ENCODE measurements at regions of chr17 and their contacts with region 1.

Region 1: GRCh38 chr17:43367737-43368242 is 31.0 kb upstream of the ARL4D start:
- DNase-seq: no peak
- H3K4me3 ChIP-seq: peak overlapping the region; percentile 46
- CTCF ChIP-seq: no peak

Region 2: GRCh38 chr17:43316522-43317142 is 51.2 kb before region 1 on chr17:
- CTCF ChIA-PET with region 1: no interaction called
- POLR2A ChIA-PET with region 1: interaction called, 14 read pairs
- DNase-seq: no peak
- H3K4me3 ChIP-seq: no peak overlapping the region
- CTCF ChIP-seq: no peak

Region 3: GRCh38 chr17:43349142-43349541 is 18.6 kb before region 1 on chr17:
- CTCF ChIA-PET with region 1: no interaction called
- POLR2A ChIA-PET with region 1: no interaction called
- DNase-seq: no peak
- H3K4me3 ChIP-seq: no peak overlapping the region
- CTCF ChIP-seq: no peak

Region 4: DNA sequence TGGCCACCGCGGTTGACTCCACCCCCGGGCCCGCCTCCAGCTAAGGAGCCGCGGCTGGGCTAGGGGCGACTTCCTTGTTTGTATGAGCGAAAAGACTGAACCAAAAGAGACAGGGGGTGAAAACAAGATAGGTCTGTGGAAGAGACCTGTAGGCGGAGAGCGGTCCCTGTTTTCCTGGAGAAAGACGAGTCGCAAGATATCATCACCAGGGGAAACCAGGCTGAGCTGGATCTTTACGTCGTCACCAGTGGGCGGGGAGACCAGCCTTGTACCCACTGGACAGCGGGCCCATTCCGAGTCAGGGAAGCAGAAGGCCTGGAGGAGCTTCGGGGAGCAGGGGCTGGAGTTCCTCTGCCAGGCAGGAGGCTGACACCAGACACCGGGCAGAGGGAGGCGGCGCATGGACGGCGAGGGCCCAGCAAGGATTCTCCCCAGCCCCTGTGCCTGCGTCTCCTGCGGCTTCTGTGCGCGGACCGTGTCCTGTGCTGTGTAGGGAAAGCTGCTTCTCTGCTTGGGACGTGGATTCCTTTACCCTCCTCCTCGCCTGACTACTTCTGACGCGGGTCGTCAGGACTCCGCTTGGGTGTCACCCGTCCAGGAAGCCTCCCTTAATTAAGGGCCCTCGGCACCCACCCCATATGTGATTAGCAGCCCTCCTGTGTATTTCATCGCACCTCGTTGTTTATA is 20.7 kb after region 1 on chr17:
- CTCF ChIA-PET with region 1: interaction called, 22 read pairs
- POLR2A ChIA-PET with region 1: interaction called, 72 read pairs
- DNase-seq: no peak
- H3K4me3 ChIP-seq: peak overlapping the region; percentile 65
- CTCF ChIP-seq: no peak

Region 5: DNA sequence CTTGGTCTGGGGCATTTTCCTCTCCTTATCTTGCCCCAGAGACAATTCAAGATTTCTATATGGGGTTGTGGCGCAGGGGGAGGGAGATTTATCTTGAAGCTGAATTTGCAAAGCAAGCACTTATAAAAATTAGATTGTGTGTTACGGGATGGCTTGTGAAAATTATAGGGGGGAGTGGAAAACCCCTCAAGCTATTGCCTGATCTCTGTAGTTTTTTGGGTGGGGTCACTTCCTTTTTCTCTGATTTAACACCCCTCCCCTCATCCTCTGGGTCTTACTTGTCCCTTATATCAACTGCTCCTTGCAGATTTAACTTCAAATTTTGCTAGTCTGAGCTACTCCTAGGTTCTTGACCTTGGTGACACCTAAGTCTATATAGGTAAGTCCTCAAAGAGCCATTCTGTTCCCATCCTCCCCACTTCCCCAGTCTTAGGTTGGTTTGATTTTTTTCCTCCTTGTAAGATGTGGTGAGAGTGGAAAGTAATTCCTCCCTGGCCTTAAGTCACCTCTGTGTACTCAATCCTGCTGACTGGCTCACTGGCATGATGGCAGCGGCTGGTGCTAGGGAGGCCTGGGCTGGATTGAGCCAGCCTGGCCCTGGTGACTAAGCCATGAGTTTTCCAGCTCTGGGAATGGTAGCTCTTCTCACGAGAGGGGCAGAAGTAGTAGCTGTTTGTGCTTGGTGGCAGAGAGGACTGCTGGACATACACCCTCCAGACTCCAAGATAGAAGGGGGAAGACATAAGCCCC is 33.3 kb after region 1 on chr17:
- CTCF ChIA-PET with region 1: interaction called, 3 read pairs
- POLR2A ChIA-PET with region 1: interaction called, 17 read pairs
- DNase-seq: no peak
- H3K4me3 ChIP-seq: peak overlapping the region; percentile 85
- CTCF ChIP-seq: no peak

Region 6: GRCh38 chr17:43431714-43432523 is 64.1 kb after region 1 on chr17:
- CTCF ChIA-PET with region 1: no interaction called
- POLR2A ChIA-PET with region 1: no interaction called
- DNase-seq: no peak
- H3K4me3 ChIP-seq: no peak overlapping the region
- CTCF ChIP-seq: no peak

Region 7: GRCh38 chr17:43467981-43468581 is 100.3 kb after region 1 on chr17:
- CTCF ChIA-PET with region 1: no interaction called
- POLR2A ChIA-PET with region 1: interaction called, 18 read pairs
- DNase-seq: peak; percentile 92
- H3K4me3 ChIP-seq: no peak overlapping the region
- CTCF ChIP-seq: no peak